Activated CD4-positive, alpha-beta T cell treated with anti-CD3 and anti-CD28 coated beads for 36 hours (primary cell): ENCODE measurements at regions of chr21 and their contacts with region 1.

Region 1: GRCh38 chr21:31683030-31683429 is 23.5 kb downstream of the SOD1 start:
- DNase-seq: no peak
- ATAC-seq: no peak
- H3K4me3 Mint-ChIP-seq: no peak overlapping the region
- H3K27ac Mint-ChIP-seq: peak overlapping the region; percentile 29
- H3K4me1 Mint-ChIP-seq: no peaks in the 10 kb centered on the region
- H3K27me3 Mint-ChIP-seq: no peaks in the 10 kb centered on the region

Region 2: GRCh38 chr21:31708541-31708940 is 25.5 kb after region 1 on chr21:
- CTCF ChIA-PET with region 1: interaction called, 3 read pairs
- POLR2A ChIA-PET with region 1: interaction called, 4 read pairs
- intact Hi-C with region 1: loop called in 1 of 2 experiments (anchors 2 kb)
- DNase-seq: no peak
- ATAC-seq: no peak
- H3K4me3 Mint-ChIP-seq: no peak overlapping the region
- H3K27ac Mint-ChIP-seq: no peak overlapping the region
- H3K4me1 Mint-ChIP-seq: peaks cover 64% of the 10 kb centered on the region
- H3K27me3 Mint-ChIP-seq: no peaks in the 10 kb centered on the region

Region 3: DNA sequence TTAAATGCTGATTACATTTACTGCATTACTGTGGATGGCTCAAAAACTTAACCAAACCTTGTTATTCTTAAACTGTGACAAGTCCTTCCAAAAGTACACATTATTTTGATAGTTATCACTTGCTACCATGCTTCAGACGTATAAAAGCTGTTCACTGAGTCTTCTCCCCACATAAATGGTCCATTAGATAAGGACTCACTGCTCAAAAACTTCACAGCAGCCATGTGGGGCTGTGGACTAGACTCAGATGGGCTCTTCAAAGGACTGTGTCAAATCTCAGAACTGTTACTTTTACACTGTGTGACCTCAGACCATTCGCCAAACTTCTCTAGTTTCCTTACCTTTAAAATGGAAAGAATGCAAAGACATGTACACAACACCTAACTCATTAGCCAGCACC is 37.3 kb after region 1 on chr21:
- CTCF ChIA-PET with region 1: no interaction called
- POLR2A ChIA-PET with region 1: no interaction called
- intact Hi-C with region 1: no loop called
- DNase-seq: no peak
- ATAC-seq: peak; percentile 24
- H3K4me3 Mint-ChIP-seq: no peak overlapping the region
- H3K27ac Mint-ChIP-seq: no peak overlapping the region
- H3K4me1 Mint-ChIP-seq: peaks cover 70% of the 10 kb centered on the region
- H3K27me3 Mint-ChIP-seq: no peaks in the 10 kb centered on the region